Activated CD4-positive, alpha-beta memory T cell treated with anti-CD3 and anti-CD28 coated beads, Interleukin-2, amount 10 ng/mL, durations not matched to agents 7 days and 5 days (primary cell): ENCODE measurements at regions of chr12 and their contacts with region 1.

Region 1: GRCh38 chr12:57476162-57476992 is 3.3 kb downstream of the ARHGAP9 start:
- DNase-seq: peak; percentile 86
- H3K4me3 Mint-ChIP-seq: peak overlapping the region; percentile 89
- H3K27ac Mint-ChIP-seq: peak overlapping the region; percentile 100
- H3K4me1 Mint-ChIP-seq: peaks cover 57% of the 10 kb centered on the region
- H3K27me3 Mint-ChIP-seq: no peaks in the 10 kb centered on the region

Region 2: DNA sequence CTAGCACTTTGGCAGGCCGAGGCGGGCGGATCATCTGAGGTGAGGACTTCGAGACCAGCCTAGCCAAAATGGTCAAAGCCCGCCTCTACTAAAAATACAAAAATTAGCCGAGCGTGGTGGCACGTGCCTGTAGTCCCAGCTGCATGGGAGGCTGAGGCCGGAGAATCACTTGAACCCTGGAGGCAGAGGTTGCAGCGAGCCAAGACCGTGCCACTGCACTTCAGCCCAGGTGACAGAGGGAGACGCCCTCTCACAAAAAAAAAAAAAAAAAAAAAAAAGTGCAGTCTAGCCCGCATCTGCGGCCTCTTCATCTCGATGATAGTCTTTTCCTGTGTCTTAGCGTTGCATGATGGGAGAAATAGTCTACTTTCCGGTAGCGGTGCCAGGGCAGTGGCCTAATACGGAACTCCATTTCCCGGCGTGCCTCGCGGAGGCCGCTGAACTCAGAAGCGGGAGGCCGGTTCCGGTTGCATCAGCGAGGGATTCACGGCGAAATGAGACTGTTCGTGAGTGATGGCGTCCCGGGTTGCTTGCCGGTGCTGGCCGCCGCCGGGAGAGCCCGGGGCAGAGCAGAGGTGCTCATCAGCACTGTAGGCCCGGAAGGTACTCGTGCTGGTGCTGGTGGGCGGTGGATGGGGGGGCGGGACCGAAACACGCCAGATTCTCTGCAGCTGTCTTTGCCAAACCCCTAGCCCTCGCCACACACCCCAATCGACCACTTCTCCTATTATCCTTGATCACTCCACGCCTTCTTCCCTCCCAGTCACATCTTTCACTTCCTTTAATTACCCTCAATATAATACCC is 11.4 kb after region 1 on chr12 and contains the start of gene MARS1:
- CTCF ChIA-PET with region 1: interaction called, 42 read pairs
- POLR2A ChIA-PET with region 1: interaction called, 47 read pairs
- DNase-seq: peak; percentile 95
- H3K4me3 Mint-ChIP-seq: peak within 1 kb of the TSS; percentile 86
- H3K27ac Mint-ChIP-seq: peak within 1 kb of the TSS; percentile 78
- H3K4me1 Mint-ChIP-seq: peaks cover 39% of the 10 kb centered on the region
- H3K27me3 Mint-ChIP-seq: no peaks in the 10 kb centered on the region
- total RNA-seq, gene MARS1: 262 to 282 TPM